Activated CD4-positive, alpha-beta T cell treated with anti-CD3 and anti-CD28 coated beads for 36 hours (primary cell): ENCODE measurements at regions of chr14 and their contacts with region 1.

Region 1: DNA sequence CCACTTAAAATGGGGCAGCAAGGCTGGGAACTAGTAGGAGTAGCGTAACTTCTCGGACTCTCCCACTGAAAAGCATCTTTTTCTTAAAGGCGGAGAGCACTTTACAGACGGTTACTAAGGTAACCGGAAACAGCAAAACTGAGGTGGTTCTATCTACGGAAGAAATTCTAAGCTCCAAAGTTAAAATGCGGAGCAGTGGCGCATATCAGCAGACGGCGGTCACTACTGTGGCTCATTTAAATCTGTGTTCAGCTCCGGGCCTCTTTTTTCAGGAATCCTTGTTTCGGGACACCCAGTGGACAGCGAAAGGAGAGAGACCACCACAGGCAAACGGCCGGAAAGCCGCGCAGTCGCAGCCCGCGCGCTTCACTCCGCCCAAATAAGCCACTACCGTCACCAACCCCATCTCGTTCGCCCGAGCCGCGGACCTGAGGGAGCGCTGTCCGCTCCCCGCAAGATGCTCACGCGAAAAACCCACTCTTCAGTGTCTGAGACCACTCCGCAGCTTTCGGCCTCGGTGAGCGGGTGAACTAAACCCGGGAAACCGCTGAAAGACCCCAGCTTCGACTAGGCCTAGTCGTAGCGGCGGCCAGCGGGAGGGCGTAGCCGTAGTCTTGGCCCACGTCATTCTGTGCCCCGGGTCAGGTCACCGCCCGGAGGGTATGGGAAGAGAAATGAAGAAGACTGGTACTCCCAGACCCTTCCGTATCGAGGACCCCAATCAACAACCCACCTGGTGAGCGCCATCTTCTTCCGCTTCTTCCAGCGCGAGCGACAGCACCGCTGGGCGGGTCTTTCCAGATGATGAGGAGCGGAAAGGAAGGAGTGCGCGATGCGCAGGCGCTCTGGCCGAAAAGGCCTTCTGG is at the start of gene SNW1:
- DNase-seq: peak; percentile 95
- ATAC-seq: peak; percentile 96
- H3K4me3 Mint-ChIP-seq: peak within 1 kb of the TSS; percentile 96
- H3K27ac Mint-ChIP-seq: peak within 1 kb of the TSS; percentile 98
- H3K4me1 Mint-ChIP-seq: peaks cover 33% of the 10 kb centered on the region
- H3K27me3 Mint-ChIP-seq: no peaks in the 10 kb centered on the region
- total RNA-seq, gene SNW1: 134 to 135 TPM

Region 2: DNA sequence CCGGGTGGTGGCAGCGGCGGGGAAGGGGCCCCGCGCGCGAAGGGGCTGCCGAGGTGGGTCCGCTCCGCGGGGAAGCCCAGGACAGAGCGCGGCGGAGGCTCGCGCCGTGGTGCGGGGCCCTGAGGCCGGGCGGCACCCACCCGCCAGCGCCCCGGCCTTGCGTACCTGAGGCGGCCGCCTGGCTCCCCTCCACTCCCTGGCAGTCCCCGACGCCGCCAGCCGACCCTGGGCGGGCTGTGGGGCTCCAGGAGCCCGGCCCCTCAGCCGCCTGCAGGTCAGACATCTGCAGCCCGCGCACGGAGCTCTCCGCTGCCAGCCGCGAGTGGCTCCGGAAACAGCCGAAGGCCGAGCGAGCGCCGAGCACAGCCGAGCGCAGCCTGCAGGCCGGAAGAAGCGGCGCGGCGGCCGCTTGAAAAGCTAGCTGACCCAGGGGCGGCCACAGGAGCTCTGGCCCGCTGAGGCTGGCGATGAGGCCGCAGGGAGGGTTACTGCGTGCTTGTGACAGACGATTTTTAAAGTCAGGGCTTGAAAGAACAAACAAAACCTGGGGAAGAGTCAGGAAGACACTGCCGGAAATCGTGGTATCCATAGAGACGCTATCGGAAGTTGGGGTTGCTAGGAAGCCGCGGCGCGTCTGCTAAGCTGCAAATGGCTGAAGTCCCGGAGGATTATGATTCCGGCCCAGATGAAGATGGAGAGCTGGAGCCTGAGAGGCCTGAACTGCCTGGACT is 383.7 kb before region 1 on chr14 and contains the starts of genes SAMD15 and TMED8:
- CTCF ChIA-PET with region 1: no interaction called
- POLR2A ChIA-PET with region 1: no interaction called
- intact Hi-C with region 1: loop called in 1 of 2 experiments (anchors 2 kb)
- DNase-seq: peak; percentile 91
- ATAC-seq: peak; percentile 95
- H3K4me3 Mint-ChIP-seq: no peak within 1 kb of the TSS
- H3K27ac Mint-ChIP-seq: peak within 1 kb of the TSS; percentile 86
- H3K4me1 Mint-ChIP-seq: peaks cover 40% of the 10 kb centered on the region
- H3K27me3 Mint-ChIP-seq: no peaks in the 10 kb centered on the region
- total RNA-seq, gene SAMD15: 0.25 TPM
- total RNA-seq, gene TMED8: 25.3 to 27.9 TPM

Region 3: GRCh38 chr14:77738559-77739250 is 21.9 kb before region 1 on chr14:
- CTCF ChIA-PET with region 1: interaction called, 5 read pairs
- POLR2A ChIA-PET with region 1: no interaction called
- intact Hi-C with region 1: loop called in 1 of 2 experiments (anchors 1 kb)
- DNase-seq: peak; percentile 56
- ATAC-seq: peak; percentile 78
- H3K4me3 Mint-ChIP-seq: peak overlapping the region; percentile 30
- H3K27ac Mint-ChIP-seq: peak overlapping the region; percentile 76
- H3K4me1 Mint-ChIP-seq: peaks cover 53% of the 10 kb centered on the region
- H3K27me3 Mint-ChIP-seq: no peaks in the 10 kb centered on the region

Region 4: GRCh38 chr14:77799863-77800730 is 39.5 kb after region 1 on chr14 and contains the start of gene ADCK1:
- CTCF ChIA-PET with region 1: interaction called, 4 read pairs
- POLR2A ChIA-PET with region 1: interaction called, 4 read pairs
- intact Hi-C with region 1: loop called (anchors 1 kb)
- DNase-seq: peak; percentile 94
- ATAC-seq: peak; percentile 94
- H3K4me3 Mint-ChIP-seq: peak within 1 kb of the TSS; percentile 83
- H3K27ac Mint-ChIP-seq: peak within 1 kb of the TSS; percentile 87
- H3K4me1 Mint-ChIP-seq: peaks cover 11% of the 10 kb centered on the region
- H3K27me3 Mint-ChIP-seq: no peaks in the 10 kb centered on the region
- total RNA-seq, gene ADCK1: 4.6 to 4.9 TPM